Activated CD8-positive, alpha-beta T cell treated with anti-CD3 and anti-CD28 coated beads for 36 hours (primary cell): ENCODE measurements at regions of chr2 and their contacts with region 1.

Region 1: DNA sequence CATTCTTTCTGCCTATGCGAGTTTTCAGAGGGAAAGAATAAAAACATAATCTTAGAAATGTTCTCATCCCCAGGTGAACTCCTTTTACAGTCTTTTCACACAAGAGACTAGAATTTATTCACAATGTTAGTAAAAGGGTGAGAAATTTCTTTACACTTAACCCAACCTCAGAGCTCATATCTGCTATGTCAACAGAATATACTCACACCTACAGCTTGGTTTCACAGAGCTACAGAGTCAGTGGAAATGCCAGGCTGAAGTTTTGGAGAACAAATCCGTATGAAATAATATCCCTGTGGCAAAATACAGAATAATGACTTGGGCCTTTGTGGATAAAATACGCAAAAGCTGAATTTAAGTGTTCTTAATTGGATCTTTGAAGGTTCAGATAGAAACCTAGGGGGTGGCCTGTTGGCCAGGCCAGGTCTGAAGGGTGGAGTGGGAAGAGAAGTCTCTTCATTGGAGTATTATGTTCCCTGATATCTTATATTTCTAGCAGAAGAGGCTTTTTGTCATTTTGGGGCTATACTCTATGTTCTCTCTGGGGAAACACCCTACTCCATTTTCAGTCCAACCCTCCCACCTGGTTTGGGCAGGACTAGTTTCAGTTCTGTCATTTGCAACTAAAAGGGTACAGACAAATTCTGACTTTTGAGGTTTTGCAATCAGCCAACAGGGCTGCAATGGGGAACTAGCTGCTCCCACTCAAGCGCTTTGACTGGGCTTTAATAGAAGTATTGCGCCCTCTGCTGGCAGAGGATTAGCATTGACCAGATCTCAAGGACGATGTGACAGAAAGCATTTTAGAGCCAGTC is 25.7 kb downstream of the FBXO48 start:
- DNase-seq: peak; percentile 93
- ATAC-seq: peak; percentile 98
- H3K4me3 Mint-ChIP-seq: no peak overlapping the region
- H3K27ac Mint-ChIP-seq: peak overlapping the region; percentile 81
- H3K4me1 Mint-ChIP-seq: peaks cover 16% of the 10 kb centered on the region
- H3K27me3 Mint-ChIP-seq: no peaks in the 10 kb centered on the region
- CTCF ChIP-seq: peak; percentile 89

Region 2: DNA sequence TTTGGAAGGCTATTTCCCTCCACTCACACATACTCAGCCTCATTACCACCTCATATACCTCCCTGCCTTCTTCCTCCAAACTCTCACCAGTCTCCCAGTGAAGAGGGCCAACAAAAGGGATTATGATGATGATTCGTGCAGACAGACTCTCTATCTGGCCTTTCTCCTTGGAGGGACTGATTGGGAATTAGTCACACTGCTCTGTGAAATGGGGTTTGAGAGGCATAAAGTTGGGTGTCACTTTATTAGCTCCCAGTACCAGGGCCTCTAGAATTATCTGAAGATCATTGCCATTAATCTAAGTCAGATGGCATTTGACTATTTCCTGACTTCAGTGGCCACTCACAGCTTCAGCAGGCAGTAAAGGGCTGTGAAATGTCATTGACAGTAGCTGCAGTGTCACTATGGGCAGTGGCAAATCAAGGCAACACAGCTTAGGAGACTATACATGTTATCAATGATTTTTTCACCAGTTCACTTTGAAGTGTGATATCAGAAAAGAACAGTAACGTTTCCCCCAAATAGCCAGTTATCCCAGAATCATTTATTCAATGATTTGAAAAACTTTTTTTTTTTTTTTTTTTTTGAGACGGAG is 139.0 kb before region 1 on chr2:
- CTCF ChIA-PET with region 1: interaction called, 20 read pairs
- POLR2A ChIA-PET with region 1: no interaction called
- intact Hi-C with region 1: no loop called
- DNase-seq: no peak
- ATAC-seq: no peak
- H3K4me3 Mint-ChIP-seq: no peak overlapping the region
- H3K27ac Mint-ChIP-seq: no peak overlapping the region
- H3K4me1 Mint-ChIP-seq: no peaks in the 10 kb centered on the region
- H3K27me3 Mint-ChIP-seq: peaks cover 3% of the 10 kb centered on the region
- CTCF ChIP-seq: no peak

Region 3: DNA sequence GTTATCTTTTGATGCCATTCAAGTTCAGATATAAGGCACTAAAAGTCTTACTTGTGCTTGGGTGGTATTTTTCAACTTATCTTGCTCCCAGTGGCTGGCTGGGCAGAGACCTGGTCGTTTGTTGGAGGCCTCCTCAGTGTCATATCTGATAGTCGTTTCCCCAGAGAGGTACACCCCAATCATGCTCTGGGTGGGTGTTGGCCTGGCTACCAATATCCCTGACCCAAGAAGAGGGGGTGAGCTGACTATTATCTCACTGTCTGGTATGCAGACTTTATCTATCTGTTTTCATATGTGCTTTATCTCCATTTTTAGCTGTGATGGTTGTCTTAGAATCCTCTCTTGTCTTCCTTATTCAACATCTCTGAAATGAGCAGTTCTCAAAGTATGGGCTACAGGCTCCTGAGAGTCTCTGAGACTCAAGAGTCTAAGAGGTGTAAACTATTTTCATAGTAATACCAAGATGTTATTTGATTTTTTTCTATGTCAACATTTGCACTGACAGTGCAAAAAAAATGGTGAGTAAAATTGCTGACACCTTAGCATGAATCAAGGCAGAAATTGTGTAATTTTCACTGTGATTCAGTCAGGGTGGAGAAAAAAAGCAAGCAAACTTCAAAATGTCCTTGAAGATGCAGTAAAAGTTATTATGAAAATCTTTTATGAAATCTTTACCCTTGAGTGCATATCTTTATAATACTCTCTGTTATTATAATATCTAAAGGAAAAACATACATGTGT is 88.6 kb before region 1 on chr2:
- CTCF ChIA-PET with region 1: interaction called, 18 read pairs
- POLR2A ChIA-PET with region 1: no interaction called
- intact Hi-C with region 1: no loop called
- DNase-seq: no peak
- ATAC-seq: no peak
- H3K4me3 Mint-ChIP-seq: no peak overlapping the region
- H3K27ac Mint-ChIP-seq: no peak overlapping the region
- H3K4me1 Mint-ChIP-seq: no peaks in the 10 kb centered on the region
- H3K27me3 Mint-ChIP-seq: peaks cover 11% of the 10 kb centered on the region
- CTCF ChIP-seq: no peak

Region 4: GRCh38 chr2:68362069-68362468 is 79.3 kb before region 1 on chr2:
- CTCF ChIA-PET with region 1: interaction called, 41 read pairs
- POLR2A ChIA-PET with region 1: interaction called, 3 read pairs
- intact Hi-C with region 1: loop called (anchors 1 kb)
- DNase-seq: peak; percentile 89
- ATAC-seq: peak; percentile 91
- H3K4me3 Mint-ChIP-seq: peak overlapping the region; percentile 41
- H3K27ac Mint-ChIP-seq: peak overlapping the region; percentile 78
- H3K4me1 Mint-ChIP-seq: peaks cover 29% of the 10 kb centered on the region
- H3K27me3 Mint-ChIP-seq: no peaks in the 10 kb centered on the region
- CTCF ChIP-seq: peak; percentile 77

Region 5: GRCh38 chr2:68371581-68371980 is 69.8 kb before region 1 on chr2:
- CTCF ChIA-PET with region 1: interaction called, 33 read pairs
- POLR2A ChIA-PET with region 1: interaction called, 3 read pairs
- intact Hi-C with region 1: no loop called
- DNase-seq: no peak
- ATAC-seq: no peak
- H3K4me3 Mint-ChIP-seq: no peak overlapping the region
- H3K27ac Mint-ChIP-seq: no peak overlapping the region
- H3K4me1 Mint-ChIP-seq: peaks cover 25% of the 10 kb centered on the region
- H3K27me3 Mint-ChIP-seq: peaks cover 6% of the 10 kb centered on the region
- CTCF ChIP-seq: no peak

Region 6: GRCh38 chr2:68379184-68379708 is 62.1 kb before region 1 on chr2:
- CTCF ChIA-PET with region 1: interaction called, 25 read pairs
- POLR2A ChIA-PET with region 1: no interaction called
- intact Hi-C with region 1: no loop called
- DNase-seq: peak; percentile 72
- ATAC-seq: peak; percentile 92
- H3K4me3 Mint-ChIP-seq: peak overlapping the region; percentile 26
- H3K27ac Mint-ChIP-seq: peak overlapping the region; percentile 90
- H3K4me1 Mint-ChIP-seq: peaks cover 51% of the 10 kb centered on the region
- H3K27me3 Mint-ChIP-seq: peaks cover 8% of the 10 kb centered on the region
- CTCF ChIP-seq: no peak

Region 7: GRCh38 chr2:68452168-68452900 is 10.9 kb after region 1 on chr2:
- CTCF ChIA-PET with region 1: interaction called, 16 read pairs
- POLR2A ChIA-PET with region 1: interaction called, 3 read pairs
- intact Hi-C with region 1: no loop called
- DNase-seq: no peak
- ATAC-seq: no peak
- H3K4me3 Mint-ChIP-seq: no peak overlapping the region
- H3K27ac Mint-ChIP-seq: no peak overlapping the region
- H3K4me1 Mint-ChIP-seq: peaks cover 10% of the 10 kb centered on the region
- H3K27me3 Mint-ChIP-seq: no peaks in the 10 kb centered on the region
- CTCF ChIP-seq: no peak